Activated CD4-positive, alpha-beta T cell treated with anti-CD3 and anti-CD28 coated beads, Interleukin-2, amount 10 ng/mL, durations not matched to agents 24 days and 14 days (primary cell): ENCODE measurements at regions of chr7 and their contacts with region 1.

Region 1: GRCh38 chr7:5665094-5666025 is 116.1 kb downstream of the RNF216 start:
- DNase-seq: peak; percentile 91
- H3K4me3 Mint-ChIP-seq: no peak overlapping the region
- H3K27ac Mint-ChIP-seq: no peak overlapping the region
- H3K4me1 Mint-ChIP-seq: peaks cover 25% of the 10 kb centered on the region
- H3K27me3 Mint-ChIP-seq: no peaks in the 10 kb centered on the region

Region 2: DNA sequence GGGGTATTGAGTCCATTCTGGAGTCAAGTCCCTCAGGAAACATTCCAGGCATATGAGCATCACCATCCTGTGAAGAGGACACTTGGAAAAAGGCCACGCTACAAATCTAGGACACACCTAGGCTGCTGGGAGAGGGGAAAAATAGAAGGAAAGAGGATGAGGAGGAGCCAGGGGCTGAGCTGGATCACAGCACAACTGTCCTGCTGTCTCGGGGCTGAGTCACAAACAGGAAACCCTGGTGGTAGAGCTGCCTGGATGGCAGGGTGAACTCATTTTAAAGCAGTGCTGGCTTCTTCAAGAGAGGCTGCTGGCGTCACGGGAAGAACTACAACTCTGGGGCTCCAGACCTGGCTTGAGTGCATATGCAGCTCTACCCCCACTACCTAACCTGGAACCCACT is 35.4 kb before region 1 on chr7:
- intact Hi-C with region 1: loop called (anchors 5 kb)
- DNase-seq: peak; percentile 83
- H3K4me3 Mint-ChIP-seq: peak overlapping the region; percentile 12
- H3K27ac Mint-ChIP-seq: peak overlapping the region; percentile 77
- H3K4me1 Mint-ChIP-seq: peaks cover 22% of the 10 kb centered on the region
- H3K27me3 Mint-ChIP-seq: no peaks in the 10 kb centered on the region

Region 3: DNA sequence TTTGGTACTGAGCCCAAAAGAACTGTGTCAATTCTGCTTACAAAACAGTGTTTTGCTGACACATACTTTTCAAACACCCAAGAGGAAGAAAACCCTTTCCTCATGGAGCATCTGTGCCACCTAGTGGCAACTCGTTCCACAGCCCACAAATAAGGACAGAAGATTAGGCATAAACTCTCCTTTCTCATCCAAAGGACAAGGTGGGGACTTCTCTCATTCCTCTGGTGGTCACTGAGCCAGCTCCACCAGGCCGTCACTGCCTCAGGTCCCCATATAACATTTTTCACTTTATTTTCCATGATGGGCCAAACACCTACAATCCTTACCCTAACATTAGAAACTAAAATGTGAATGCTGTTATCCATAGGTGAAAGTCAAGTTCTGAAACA is 39.2 kb after region 1 on chr7:
- intact Hi-C with region 1: loop called (anchors 5 kb)
- DNase-seq: peak; percentile 93
- H3K4me3 Mint-ChIP-seq: no peak overlapping the region
- H3K27ac Mint-ChIP-seq: no peak overlapping the region
- H3K4me1 Mint-ChIP-seq: peaks cover 52% of the 10 kb centered on the region
- H3K27me3 Mint-ChIP-seq: no peaks in the 10 kb centered on the region